ENCODE measurements at regions of chr3 and their contacts with region 1.

Region 1: DNA sequence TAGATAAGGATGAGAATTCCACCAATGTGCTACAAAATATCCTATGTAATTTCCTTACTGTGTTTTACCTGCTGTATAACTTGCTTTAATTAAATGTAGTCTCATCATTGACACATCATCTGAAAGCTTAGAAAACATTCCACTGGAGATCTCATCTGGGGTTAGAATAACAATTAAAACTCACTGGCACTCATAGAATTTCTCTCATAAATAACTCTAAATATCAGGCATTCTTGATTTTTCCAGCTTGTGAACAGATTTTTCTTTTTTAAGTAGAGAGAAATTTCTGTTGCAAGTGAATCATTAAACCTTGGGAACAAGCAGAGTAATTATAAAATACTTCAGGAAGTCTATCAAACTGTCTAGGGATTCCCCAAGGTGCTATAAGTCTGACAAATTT is 843.8 kb downstream of the NAALADL2 start:
- DNase-seq: no peak
- H3K4me3 ChIP-seq: no peak overlapping the region
- H3K27me3 ChIP-seq: no peaks in the 10 kb centered on the region
- CTCF ChIP-seq: no peak

Region 2: GRCh38 chr3:175729466-175729865 is 26.5 kb after region 1 on chr3:
- CTCF ChIA-PET with region 1: no interaction called
- POLR2A ChIA-PET with region 1: no interaction called
- DNase-seq: no peak
- H3K4me3 ChIP-seq: no peak overlapping the region
- H3K27me3 ChIP-seq: no peaks in the 10 kb centered on the region
- CTCF ChIP-seq: no peak

Region 3: GRCh38 chr3:175890066-175890465 is 187.1 kb after region 1 on chr3:
- CTCF ChIA-PET with region 1: no interaction called
- POLR2A ChIA-PET with region 1: interaction called, 15 read pairs
- DNase-seq: peak; percentile 19
- H3K4me3 ChIP-seq: no peak overlapping the region
- H3K27me3 ChIP-seq: no peaks in the 10 kb centered on the region
- CTCF ChIP-seq: no peak

Measured in BJ (cell line).